CD8-positive, alpha-beta T cell (primary cell): ENCODE measurements at regions of chr15 and their contacts with region 1.

Region 1: DNA sequence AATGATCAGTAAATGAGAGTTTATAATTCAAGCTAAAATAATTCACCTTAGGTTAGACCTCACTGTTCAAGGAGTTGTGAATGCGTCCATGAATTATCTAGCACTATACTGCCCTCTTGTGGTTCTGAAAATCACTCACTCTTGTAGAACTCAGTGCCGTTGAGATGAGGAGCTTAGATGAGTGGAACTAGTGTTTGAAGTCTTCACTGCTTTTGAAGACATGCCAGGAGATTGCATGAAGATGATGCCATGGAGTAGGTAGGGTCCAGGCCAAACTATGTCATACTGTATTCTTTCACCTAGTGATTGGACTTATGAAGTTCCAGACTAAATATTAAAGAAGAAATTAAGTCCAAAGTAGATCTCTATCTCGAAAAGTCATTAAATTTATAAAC is 28.8 kb downstream of the LYSMD4 start:
- DNase-seq: peak in 4 of 9 experiments; percentile 19 to 85 (median 58)
- ATAC-seq: peak; percentile 74
- H3K4me3 ChIP-seq: no peak overlapping the region
- H3K4me3 Mint-ChIP-seq: no peak overlapping the region
- H3K27ac ChIP-seq: no peak overlapping the region
- H3K27ac Mint-ChIP-seq: no peak overlapping the region
- H3K4me1 ChIP-seq: peaks cover 38% of the 10 kb centered on the region
- H3K4me1 Mint-ChIP-seq: peaks cover 51% of the 10 kb centered on the region
- H3K27me3 ChIP-seq: no peaks in the 10 kb centered on the region
- H3K27me3 Mint-ChIP-seq: no peaks in the 10 kb centered on the region
- CTCF ChIP-seq: peak; percentile 63

Region 2: GRCh38 chr15:98321896-98322295 is 1382.5 kb before region 1 on chr15:
- CTCF ChIA-PET with region 1: no interaction called
- POLR2A ChIA-PET with region 1: no interaction called
- intact Hi-C with region 1: no loop called
- DNase-seq: no peak
- ATAC-seq: no peak
- H3K4me3 ChIP-seq: no peak overlapping the region
- H3K4me3 Mint-ChIP-seq: no peak overlapping the region
- H3K27ac ChIP-seq: no peak overlapping the region
- H3K27ac Mint-ChIP-seq: no peak overlapping the region
- H3K4me1 ChIP-seq: no peaks in the 10 kb centered on the region
- H3K4me1 Mint-ChIP-seq: no peaks in the 10 kb centered on the region
- H3K27me3 ChIP-seq: no peaks in the 10 kb centered on the region
- H3K27me3 Mint-ChIP-seq: peaks cover 5% of the 10 kb centered on the region
- CTCF ChIP-seq: no peak

Region 3: GRCh38 chr15:98699591-98700424 is 1004.6 kb before region 1 on chr15:
- CTCF ChIA-PET with region 1: no interaction called
- POLR2A ChIA-PET with region 1: no interaction called
- intact Hi-C with region 1: no loop called
- DNase-seq: no peak
- ATAC-seq: no peak
- H3K4me3 ChIP-seq: no peak overlapping the region
- H3K4me3 Mint-ChIP-seq: no peak overlapping the region
- H3K27ac ChIP-seq: no peak overlapping the region
- H3K27ac Mint-ChIP-seq: peak overlapping the region; percentile 12
- H3K4me1 ChIP-seq: peaks cover 46% of the 10 kb centered on the region
- H3K4me1 Mint-ChIP-seq: peaks cover 65% of the 10 kb centered on the region
- H3K27me3 ChIP-seq: no peaks in the 10 kb centered on the region
- H3K27me3 Mint-ChIP-seq: no peaks in the 10 kb centered on the region
- CTCF ChIP-seq: no peak

Region 4: DNA sequence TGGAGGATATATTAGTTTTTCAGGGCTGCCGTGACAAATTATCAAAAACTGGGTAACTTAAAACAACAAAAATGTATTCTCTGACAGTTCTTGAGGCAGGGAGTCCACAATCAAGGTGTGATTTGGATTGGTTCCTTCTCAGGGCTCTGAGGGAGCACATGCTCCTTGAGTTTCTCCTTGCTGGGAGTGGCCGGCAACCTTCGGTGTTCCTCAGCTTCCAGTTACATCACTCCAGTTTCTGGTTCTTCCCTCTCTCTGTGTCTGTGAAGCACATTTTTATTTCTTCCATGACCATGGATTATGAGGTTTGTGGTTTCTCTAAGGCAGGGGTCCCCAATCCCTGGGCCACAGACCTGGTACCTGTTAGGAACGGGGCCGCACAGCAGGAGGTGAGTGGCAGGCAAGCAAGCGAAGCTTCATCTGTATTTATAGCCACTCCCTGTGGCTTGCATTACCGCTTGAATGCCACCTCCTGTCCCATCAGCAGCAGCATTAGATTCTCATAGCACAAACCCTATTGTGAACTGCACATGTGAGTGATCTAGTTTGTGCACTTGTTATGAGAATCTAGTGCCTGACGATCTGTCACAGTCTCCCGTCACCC is 428.8 kb before region 1 on chr15:
- CTCF ChIA-PET with region 1: interaction called, 54 read pairs
- POLR2A ChIA-PET with region 1: interaction called, 3 read pairs
- intact Hi-C with region 1: loop called (anchors 1 to 2 kb)
- DNase-seq: no peak
- ATAC-seq: no peak
- H3K4me3 ChIP-seq: no peak overlapping the region
- H3K4me3 Mint-ChIP-seq: no peak overlapping the region
- H3K27ac ChIP-seq: no peak overlapping the region
- H3K27ac Mint-ChIP-seq: no peak overlapping the region
- H3K4me1 ChIP-seq: no peaks in the 10 kb centered on the region
- H3K4me1 Mint-ChIP-seq: peaks cover 13% of the 10 kb centered on the region
- H3K27me3 ChIP-seq: no peaks in the 10 kb centered on the region
- H3K27me3 Mint-ChIP-seq: no peaks in the 10 kb centered on the region
- CTCF ChIP-seq: no peak

Region 5: GRCh38 chr15:99343881-99344551 is 360.4 kb before region 1 on chr15:
- CTCF ChIA-PET with region 1: interaction called, 31 read pairs
- POLR2A ChIA-PET with region 1: interaction called, 6 read pairs
- intact Hi-C with region 1: loop called (anchors 1 kb)
- DNase-seq: peak; percentile 12 to 76 (median 53)
- ATAC-seq: peak; percentile 79
- H3K4me3 ChIP-seq: no peak overlapping the region
- H3K4me3 Mint-ChIP-seq: no peak overlapping the region
- H3K27ac ChIP-seq: no peak overlapping the region
- H3K27ac Mint-ChIP-seq: no peak overlapping the region
- H3K4me1 ChIP-seq: no peaks in the 10 kb centered on the region
- H3K4me1 Mint-ChIP-seq: peaks cover 5% of the 10 kb centered on the region
- H3K27me3 ChIP-seq: no peaks in the 10 kb centered on the region
- H3K27me3 Mint-ChIP-seq: no peaks in the 10 kb centered on the region
- CTCF ChIP-seq: peak; percentile 62

Region 6: GRCh38 chr15:99657996-99658395 is 46.4 kb before region 1 on chr15:
- CTCF ChIA-PET with region 1: interaction called, 10 read pairs
- POLR2A ChIA-PET with region 1: no interaction called
- intact Hi-C with region 1: no loop called
- DNase-seq: no peak
- ATAC-seq: no peak
- H3K4me3 ChIP-seq: no peak overlapping the region
- H3K4me3 Mint-ChIP-seq: no peak overlapping the region
- H3K27ac ChIP-seq: no peak overlapping the region
- H3K27ac Mint-ChIP-seq: no peak overlapping the region
- H3K4me1 ChIP-seq: peaks cover 7% of the 10 kb centered on the region
- H3K4me1 Mint-ChIP-seq: peaks cover 10% of the 10 kb centered on the region
- H3K27me3 ChIP-seq: no peaks in the 10 kb centered on the region
- H3K27me3 Mint-ChIP-seq: no peaks in the 10 kb centered on the region
- CTCF ChIP-seq: no peak

Region 7: GRCh38 chr15:99719096-99719541 is 14.7 kb after region 1 on chr15:
- CTCF ChIA-PET with region 1: interaction called, 28 read pairs
- POLR2A ChIA-PET with region 1: interaction called, 4 read pairs
- intact Hi-C with region 1: no loop called
- DNase-seq: no peak
- ATAC-seq: no peak
- H3K4me3 ChIP-seq: no peak overlapping the region
- H3K4me3 Mint-ChIP-seq: no peak overlapping the region
- H3K27ac ChIP-seq: no peak overlapping the region
- H3K27ac Mint-ChIP-seq: no peak overlapping the region
- H3K4me1 ChIP-seq: peaks cover 24% of the 10 kb centered on the region
- H3K4me1 Mint-ChIP-seq: peaks cover 23% of the 10 kb centered on the region
- H3K27me3 ChIP-seq: no peaks in the 10 kb centered on the region
- H3K27me3 Mint-ChIP-seq: no peaks in the 10 kb centered on the region
- CTCF ChIP-seq: no peak